Mammary epithelial cell (primary cell): ENCODE measurements at regions of chr1 and their contacts with region 1.

Region 1: GRCh38 chr1:44072204-44072603 is 40.9 kb upstream of the SLC6A9 start:
- DNase-seq: peak; percentile 82
- H3K4me3 ChIP-seq: no peak overlapping the region
- H3K27ac ChIP-seq: no peak overlapping the region
- H3K4me1 ChIP-seq: peaks cover 4% of the 10 kb centered on the region
- H3K27me3 ChIP-seq: peaks cover 4% of the 10 kb centered on the region
- CTCF ChIP-seq: no peak

Region 2: DNA sequence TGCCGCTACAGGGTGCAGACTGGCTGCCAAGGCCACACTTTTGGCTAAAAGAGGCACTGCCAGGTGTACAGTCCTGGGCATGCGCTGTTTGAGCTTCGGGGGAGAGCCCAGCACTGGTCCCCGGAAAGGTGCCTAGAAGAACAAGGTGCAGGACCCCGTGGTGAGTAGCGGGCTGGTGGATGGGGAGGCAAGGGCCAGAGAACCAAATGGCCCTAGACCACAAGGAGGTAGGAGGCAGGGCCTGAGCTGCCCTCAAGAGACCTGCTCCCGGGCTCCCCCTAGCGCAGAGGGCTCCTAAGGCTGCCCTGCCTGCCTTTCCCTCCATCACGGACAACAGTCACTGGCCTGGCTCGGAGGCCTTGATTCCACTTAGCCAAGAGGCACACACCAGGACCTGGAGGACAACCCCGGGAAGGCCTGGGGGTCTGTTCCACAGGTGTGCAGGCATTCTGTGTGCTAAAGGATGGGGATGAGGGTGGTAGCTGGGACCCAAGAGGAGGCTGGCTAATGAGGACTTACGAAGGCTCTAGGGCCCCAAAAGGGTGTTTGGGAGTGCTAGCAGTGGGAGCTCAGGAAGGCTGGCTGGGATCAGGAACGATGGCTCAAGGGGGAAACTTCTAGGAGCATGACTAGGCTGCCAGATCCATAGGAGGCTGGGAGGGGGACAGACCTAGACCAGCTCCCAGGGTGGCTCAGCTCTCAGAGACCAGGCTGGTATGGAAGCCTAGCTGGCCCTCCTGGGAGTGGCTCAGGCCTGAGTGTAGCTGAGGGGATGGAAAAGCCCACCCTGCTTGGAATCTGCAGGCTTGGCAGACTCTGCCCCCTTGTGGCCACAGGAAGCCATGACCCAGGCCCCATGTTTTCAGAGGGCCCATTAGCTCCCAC is 137.9 kb before region 1 on chr1:
- CTCF ChIA-PET with region 1: no interaction called
- dilution Hi-C with region 1: no loop called
- in situ Hi-C with region 1: no loop called
- intact Hi-C with region 1: no loop called
- DNase-seq: peak; percentile 71
- H3K4me3 ChIP-seq: peak overlapping the region; percentile 69 to 74 (median 70)
- H3K27ac ChIP-seq: peak overlapping the region; percentile 81
- H3K4me1 ChIP-seq: peaks cover 73% of the 10 kb centered on the region
- H3K27me3 ChIP-seq: no peaks in the 10 kb centered on the region
- CTCF ChIP-seq: peak; percentile 89 to 95

Region 3: GRCh38 chr1:43952731-43953346 is 119.4 kb before region 1 on chr1:
- CTCF ChIA-PET with region 1: no interaction called
- dilution Hi-C with region 1: loop called (anchors 10 kb)
- in situ Hi-C with region 1: no loop called
- intact Hi-C with region 1: no loop called
- DNase-seq: no peak
- H3K4me3 ChIP-seq: no peak overlapping the region
- H3K27ac ChIP-seq: no peak overlapping the region
- H3K4me1 ChIP-seq: peaks cover 14% of the 10 kb centered on the region
- H3K27me3 ChIP-seq: no peaks in the 10 kb centered on the region
- CTCF ChIP-seq: no peak

Region 4: GRCh38 chr1:44089371-44090049 is 17.3 kb after region 1 on chr1:
- CTCF ChIA-PET with region 1: no interaction called
- dilution Hi-C with region 1: no loop called
- in situ Hi-C with region 1: no loop called
- intact Hi-C with region 1: no loop called
- DNase-seq: no peak
- H3K4me3 ChIP-seq: no peak overlapping the region
- H3K27ac ChIP-seq: no peak overlapping the region
- H3K4me1 ChIP-seq: peaks cover 9% of the 10 kb centered on the region
- H3K27me3 ChIP-seq: no peaks in the 10 kb centered on the region
- CTCF ChIP-seq: no peak

Region 5: DNA sequence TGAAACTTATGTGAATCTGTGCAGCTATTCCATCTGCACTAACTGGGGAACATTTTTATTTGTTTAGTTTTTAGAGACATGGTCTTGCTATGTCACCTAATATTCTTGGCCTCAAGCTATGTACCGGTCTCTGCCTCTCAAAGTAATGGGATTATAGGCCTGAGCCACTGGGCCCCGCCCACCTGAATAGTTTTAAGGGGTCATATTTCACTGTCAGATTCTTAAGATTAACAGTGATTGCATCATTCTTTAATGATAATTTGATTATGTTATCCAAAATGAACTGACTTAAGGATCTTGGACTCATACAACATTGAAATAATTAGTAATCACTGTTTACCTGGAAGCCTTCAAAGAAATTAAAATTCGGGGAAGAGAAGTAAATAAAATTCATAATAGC is 81.8 kb after region 1 on chr1:
- CTCF ChIA-PET with region 1: no interaction called
- dilution Hi-C with region 1: no loop called
- in situ Hi-C with region 1: no loop called
- intact Hi-C with region 1: no loop called
- DNase-seq: no peak
- H3K4me3 ChIP-seq: no peak overlapping the region
- H3K27ac ChIP-seq: no peak overlapping the region
- H3K4me1 ChIP-seq: no peaks in the 10 kb centered on the region
- H3K27me3 ChIP-seq: no peaks in the 10 kb centered on the region
- CTCF ChIP-seq: no peak